CD4-positive, alpha-beta T cell (primary cell): ENCODE measurements at regions of chr12 and their contacts with region 1.

Region 1: DNA sequence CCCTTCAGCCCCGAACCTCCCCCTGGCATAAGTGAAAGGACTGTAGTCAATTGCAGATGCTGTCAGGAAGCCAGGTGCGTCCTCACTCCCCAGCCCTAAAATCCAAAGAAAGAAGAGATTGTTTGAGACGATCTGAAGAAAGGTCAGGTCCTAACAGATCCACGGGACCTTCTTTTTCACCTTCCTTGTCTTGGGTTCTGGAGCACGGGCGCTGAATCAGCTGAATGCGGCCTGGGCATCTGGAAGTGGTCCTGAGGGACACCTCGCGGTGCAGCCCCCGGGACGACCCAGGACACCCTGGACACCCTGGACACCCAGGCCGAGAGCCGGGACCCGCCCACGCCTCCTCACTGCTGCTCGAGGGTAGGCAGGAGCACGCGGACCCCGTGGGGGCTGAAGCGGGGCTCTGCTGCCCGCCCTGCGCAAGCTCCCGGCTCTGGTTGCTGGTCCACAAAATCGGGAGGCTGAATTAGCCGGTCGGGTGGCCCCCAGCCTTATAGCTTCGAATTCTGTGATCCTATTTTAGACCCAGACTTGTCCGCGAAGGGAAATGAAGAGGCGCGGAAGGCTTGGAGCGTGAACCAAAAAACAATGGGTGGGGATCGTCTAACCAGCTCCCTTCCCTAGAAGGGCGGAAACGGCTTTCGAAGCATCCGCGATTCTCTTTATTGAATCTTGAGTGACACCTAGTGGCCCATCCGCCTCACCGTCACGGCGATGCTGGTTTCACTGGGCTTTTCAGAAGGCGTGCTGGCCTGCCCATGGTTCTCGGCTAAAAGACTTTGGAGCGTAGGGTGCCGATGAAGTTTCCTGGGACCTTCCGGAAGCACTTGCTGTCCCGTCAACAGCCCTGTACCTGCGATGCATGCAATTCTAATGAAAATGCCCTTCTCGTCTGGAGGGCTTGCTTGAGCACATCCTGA is 46.4 kb upstream of the PLXNC1 start:
- DNase-seq: peak; percentile 73 to 92 (median 79)
- ATAC-seq: peak; percentile 90
- H3K4me3 ChIP-seq: peak overlapping the region; percentile 86
- H3K4me3 Mint-ChIP-seq: peak overlapping the region; percentile 90
- H3K27ac ChIP-seq: peak overlapping the region in 1 of 2 donors; percentile 29
- H3K27ac Mint-ChIP-seq: peak overlapping the region; percentile 43
- H3K4me1 ChIP-seq: peaks cover 19% of the 10 kb centered on the region
- H3K4me1 Mint-ChIP-seq: peaks cover 5% of the 10 kb centered on the region
- H3K27me3 ChIP-seq: no peaks in the 10 kb centered on the region
- H3K27me3 Mint-ChIP-seq: peaks cover 15% of the 10 kb centered on the region
- CTCF ChIP-seq: peak; percentile 70

Region 2: DNA sequence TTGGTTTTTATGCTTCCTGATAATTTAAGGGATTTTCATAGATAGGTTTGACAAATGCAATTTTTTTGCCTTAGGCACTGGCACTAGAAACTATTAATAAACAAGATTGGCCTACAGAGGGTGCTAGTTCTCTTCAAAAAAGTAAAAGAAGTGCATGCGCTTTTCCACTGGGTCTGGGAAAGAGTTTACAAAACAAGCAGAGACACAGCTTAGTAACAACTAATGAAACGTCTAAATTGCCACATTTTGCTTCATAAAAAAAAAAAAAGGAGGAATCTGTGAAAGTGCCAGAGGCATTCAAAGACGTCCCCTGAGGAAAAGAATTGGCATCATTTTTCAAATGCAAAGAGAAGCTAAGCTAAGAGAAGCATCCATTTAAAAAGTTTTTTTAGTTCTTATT is 1114.6 kb before region 1 on chr12:
- CTCF ChIA-PET with region 1: interaction called, 8 read pairs
- POLR2A ChIA-PET with region 1: interaction called, 4 read pairs
- intact Hi-C with region 1: loop called (anchors 1 to 2 kb)
- DNase-seq: peak in 4 of 14 experiments; percentile 13 to 73 (median 70)
- ATAC-seq: peak; percentile 81
- H3K4me3 ChIP-seq: no peak overlapping the region
- H3K4me3 Mint-ChIP-seq: peak overlapping the region; percentile 26
- H3K27ac ChIP-seq: no peak overlapping the region
- H3K27ac Mint-ChIP-seq: no peak overlapping the region
- H3K4me1 ChIP-seq: peaks cover 7% of the 10 kb centered on the region
- H3K4me1 Mint-ChIP-seq: peaks cover 12% of the 10 kb centered on the region
- H3K27me3 ChIP-seq: no peaks in the 10 kb centered on the region
- H3K27me3 Mint-ChIP-seq: no peaks in the 10 kb centered on the region
- CTCF ChIP-seq: peak; percentile 80

Region 3: DNA sequence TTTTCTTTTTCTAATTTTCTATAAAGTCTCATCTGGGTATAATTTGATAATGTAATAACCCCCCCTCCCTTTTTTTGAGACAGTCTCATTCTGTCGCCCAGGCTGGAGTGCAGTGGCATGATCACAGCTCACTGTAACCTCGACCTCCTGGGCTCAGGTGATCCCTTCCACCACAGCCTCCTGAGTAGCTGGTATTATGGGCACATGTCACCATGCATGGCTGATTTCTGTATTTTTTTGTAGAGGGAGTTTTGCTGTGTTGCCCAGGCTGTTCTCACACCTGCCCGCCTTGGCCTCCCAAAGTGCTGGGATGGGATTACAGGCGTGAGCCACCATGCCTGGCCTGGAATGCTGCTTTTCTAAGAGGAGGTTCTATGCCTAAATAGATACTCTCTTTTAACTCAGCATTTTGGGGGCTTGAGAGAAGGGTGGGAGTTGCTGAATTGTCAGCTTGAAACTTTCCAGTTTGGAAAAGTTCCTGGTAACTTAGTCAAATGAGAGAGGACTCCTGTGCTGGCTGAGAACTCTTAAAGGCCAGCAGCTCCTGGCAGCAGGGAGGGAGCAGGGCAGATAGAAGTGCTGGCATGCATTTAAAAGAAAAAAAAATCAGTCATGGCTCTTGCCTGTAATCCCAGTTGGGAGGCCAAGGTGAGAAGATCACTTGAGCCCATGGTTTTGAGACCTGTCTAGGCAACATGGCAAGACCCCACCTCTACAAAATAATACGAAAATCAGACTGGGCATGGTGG is 711.3 kb before region 1 on chr12:
- CTCF ChIA-PET with region 1: no interaction called
- POLR2A ChIA-PET with region 1: no interaction called
- intact Hi-C with region 1: loop called in 1 of 2 experiments (anchors 10 kb)
- DNase-seq: no peak
- ATAC-seq: no peak
- H3K4me3 ChIP-seq: no peak overlapping the region
- H3K4me3 Mint-ChIP-seq: no peak overlapping the region
- H3K27ac ChIP-seq: no peak overlapping the region
- H3K27ac Mint-ChIP-seq: no peak overlapping the region
- H3K4me1 ChIP-seq: peaks cover 5% of the 10 kb centered on the region
- H3K4me1 Mint-ChIP-seq: peaks cover 39% of the 10 kb centered on the region
- H3K27me3 ChIP-seq: no peaks in the 10 kb centered on the region
- H3K27me3 Mint-ChIP-seq: no peaks in the 10 kb centered on the region
- CTCF ChIP-seq: no peak

Region 4: DNA sequence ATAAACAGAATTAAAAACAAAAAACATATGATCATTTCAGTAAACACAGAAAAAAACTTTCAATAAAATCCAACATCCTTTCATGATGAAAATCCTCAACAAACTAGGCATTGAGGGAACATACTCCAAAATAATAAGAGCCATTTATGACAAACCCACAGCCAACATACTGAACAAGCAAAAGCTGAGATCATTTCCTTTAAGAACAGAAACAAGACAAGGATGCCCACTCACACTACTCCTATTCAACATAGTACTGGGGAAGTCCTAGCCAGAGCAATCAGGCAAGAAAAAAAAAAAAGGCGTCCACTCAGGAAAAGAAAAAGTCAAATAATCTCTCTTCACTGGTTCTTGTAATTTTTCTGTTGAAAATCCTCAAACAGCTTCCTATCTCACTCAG is 604.5 kb before region 1 on chr12:
- CTCF ChIA-PET with region 1: interaction called, 116 read pairs
- POLR2A ChIA-PET with region 1: interaction called, 37 read pairs
- intact Hi-C with region 1: no loop called
- DNase-seq: no peak
- ATAC-seq: no peak
- H3K4me3 ChIP-seq: no peak overlapping the region
- H3K4me3 Mint-ChIP-seq: no peak overlapping the region
- H3K27ac ChIP-seq: no peak overlapping the region
- H3K27ac Mint-ChIP-seq: peak overlapping the region; percentile 19
- H3K4me1 ChIP-seq: no peaks in the 10 kb centered on the region
- H3K4me1 Mint-ChIP-seq: no peaks in the 10 kb centered on the region
- H3K27me3 ChIP-seq: no peaks in the 10 kb centered on the region
- H3K27me3 Mint-ChIP-seq: no peaks in the 10 kb centered on the region
- CTCF ChIP-seq: no peak

Region 5: DNA sequence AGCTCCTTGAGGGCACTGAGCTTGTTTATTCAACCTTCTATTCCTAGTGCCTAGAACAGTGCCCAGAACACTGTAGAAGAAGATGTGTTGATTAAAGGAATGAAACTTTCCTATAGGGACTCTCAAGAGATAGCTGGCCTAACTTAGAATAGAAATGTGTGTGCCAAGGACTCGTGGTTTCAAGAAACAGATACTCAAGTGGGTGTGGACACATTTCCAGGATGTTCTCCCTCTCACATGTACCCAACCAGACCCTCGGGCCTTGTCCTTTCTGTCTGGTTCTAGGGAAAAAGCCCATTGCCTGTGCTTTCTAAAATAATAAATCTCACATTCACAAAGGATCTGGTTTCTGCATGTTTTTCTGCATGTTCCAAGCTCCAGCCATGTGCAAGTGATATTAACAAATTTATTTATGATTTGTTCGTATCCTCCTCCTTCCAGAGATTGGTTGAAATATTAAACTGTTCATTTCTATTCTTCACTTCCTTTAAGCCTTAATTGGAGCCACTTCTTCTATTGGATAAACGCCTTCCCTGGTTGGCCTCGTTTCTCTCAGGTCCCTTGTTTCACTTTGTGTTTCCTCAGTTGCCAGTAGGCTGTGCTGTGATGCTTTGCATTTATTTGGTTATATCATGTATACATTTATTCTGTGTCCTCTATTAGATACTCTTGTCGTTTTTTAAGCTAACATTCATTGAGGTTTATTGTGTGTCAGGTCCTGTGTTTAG is 335.0 kb before region 1 on chr12:
- CTCF ChIA-PET with region 1: interaction called, 77 read pairs
- POLR2A ChIA-PET with region 1: interaction called, 3 read pairs
- intact Hi-C with region 1: loop called (anchors 1 kb)
- DNase-seq: peak in 9 of 14 experiments; percentile 9 to 68 (median 23)
- ATAC-seq: peak; percentile 63
- H3K4me3 ChIP-seq: no peak overlapping the region
- H3K4me3 Mint-ChIP-seq: no peak overlapping the region
- H3K27ac ChIP-seq: no peak overlapping the region
- H3K27ac Mint-ChIP-seq: no peak overlapping the region
- H3K4me1 ChIP-seq: peaks cover 2% of the 10 kb centered on the region
- H3K4me1 Mint-ChIP-seq: peaks cover 27% of the 10 kb centered on the region
- H3K27me3 ChIP-seq: no peaks in the 10 kb centered on the region
- H3K27me3 Mint-ChIP-seq: no peaks in the 10 kb centered on the region
- CTCF ChIP-seq: peak; percentile 26

Region 6: GRCh38 chr12:94126067-94126466 is 24.1 kb after region 1 on chr12:
- CTCF ChIA-PET with region 1: no interaction called
- POLR2A ChIA-PET with region 1: interaction called, 10 read pairs
- intact Hi-C with region 1: no loop called
- DNase-seq: peak in 2 of 14 experiments; percentile 38 to 39
- ATAC-seq: no peak
- H3K4me3 ChIP-seq: no peak overlapping the region
- H3K4me3 Mint-ChIP-seq: peak overlapping the region; percentile 26
- H3K27ac ChIP-seq: no peak overlapping the region
- H3K27ac Mint-ChIP-seq: peak overlapping the region; percentile 15
- H3K4me1 ChIP-seq: peaks cover 34% of the 10 kb centered on the region
- H3K4me1 Mint-ChIP-seq: peaks cover 53% of the 10 kb centered on the region
- H3K27me3 ChIP-seq: no peaks in the 10 kb centered on the region
- H3K27me3 Mint-ChIP-seq: no peaks in the 10 kb centered on the region
- CTCF ChIP-seq: no peak

Region 7: DNA sequence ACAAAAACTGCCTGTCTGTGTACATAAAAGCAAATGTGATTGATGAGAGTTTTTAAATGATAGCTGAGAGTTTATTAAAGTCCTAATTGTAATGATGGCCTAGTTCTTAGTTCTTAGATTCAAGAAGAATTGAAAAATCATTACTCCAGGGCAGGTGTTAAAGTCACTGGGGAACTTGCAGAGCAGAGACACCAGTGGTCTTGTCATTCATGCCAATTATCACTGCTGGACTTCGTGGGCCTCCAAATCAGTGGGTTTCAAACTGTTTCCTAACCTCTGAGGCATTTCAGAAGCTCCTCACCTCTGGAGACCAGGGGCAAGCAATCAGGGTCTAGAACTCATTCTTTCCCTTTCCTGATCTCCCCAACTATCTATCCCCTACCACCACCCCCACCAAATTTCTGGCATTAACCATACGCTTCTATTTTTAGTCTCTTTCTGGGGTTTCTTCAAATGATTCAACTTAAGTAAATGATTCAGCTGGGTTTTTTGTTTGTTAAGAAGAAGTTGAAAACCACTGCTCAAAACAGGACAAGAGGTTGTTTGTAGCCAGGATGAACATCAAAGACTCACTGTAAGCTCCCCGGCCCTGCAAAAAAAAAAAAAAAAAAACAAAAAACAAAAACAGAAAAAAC is 277.6 kb after region 1 on chr12:
- CTCF ChIA-PET with region 1: no interaction called
- POLR2A ChIA-PET with region 1: no interaction called
- intact Hi-C with region 1: no loop called
- DNase-seq: no peak
- ATAC-seq: no peak
- H3K4me3 ChIP-seq: no peak overlapping the region
- H3K4me3 Mint-ChIP-seq: no peak overlapping the region
- H3K27ac ChIP-seq: no peak overlapping the region
- H3K27ac Mint-ChIP-seq: no peak overlapping the region
- H3K4me1 ChIP-seq: no peaks in the 10 kb centered on the region
- H3K4me1 Mint-ChIP-seq: no peaks in the 10 kb centered on the region
- H3K27me3 ChIP-seq: no peaks in the 10 kb centered on the region
- H3K27me3 Mint-ChIP-seq: no peaks in the 10 kb centered on the region
- CTCF ChIP-seq: no peak